ENCODE measurements at regions of chr11 and their contacts with region 1.

Region 1: DNA sequence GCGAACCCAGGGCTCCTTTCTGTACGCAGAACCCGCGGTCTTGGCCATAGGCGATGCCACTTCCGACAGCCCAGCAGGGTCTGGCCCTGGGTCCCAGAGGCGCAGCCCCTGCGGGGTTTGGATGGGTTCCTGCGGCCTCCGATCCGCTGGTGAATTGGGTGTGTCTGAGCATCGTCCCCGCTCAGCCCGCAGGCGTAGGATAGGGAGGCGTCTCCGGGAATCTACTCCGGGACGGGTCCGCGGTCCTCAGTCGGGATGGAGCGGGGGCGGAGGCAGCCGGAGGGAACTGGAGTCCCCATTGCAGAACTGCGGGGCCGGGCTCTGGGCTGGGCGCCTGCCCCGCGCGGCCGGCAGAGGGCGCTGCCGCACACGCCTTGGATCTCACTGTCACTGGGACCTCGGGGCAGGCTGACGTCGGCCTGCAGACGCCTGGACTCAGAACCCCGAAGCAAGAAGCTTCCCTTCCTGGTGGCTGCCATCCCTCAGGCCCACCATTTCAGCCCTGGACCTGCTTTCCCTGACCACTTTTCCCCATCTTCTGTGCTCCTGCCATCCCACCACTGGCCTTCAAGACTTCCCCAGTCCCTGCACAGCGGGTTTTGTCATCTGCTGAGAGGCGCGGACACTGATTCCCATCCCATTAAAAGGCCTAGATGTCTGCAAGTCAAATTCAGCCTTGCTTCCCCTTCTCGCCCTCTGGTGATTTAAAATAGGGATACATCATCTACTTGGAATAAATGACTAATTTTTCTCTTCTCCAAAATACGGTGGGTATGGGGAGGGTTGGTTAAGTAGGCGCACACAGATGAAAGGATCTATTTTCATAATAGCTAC is 38.3 kb upstream of the CREB3L1 start:
- DNase-seq: peak; percentile 84
- ATAC-seq: peak; percentile 66
- H3K4me3 Mint-ChIP-seq: peak overlapping the region; percentile 60
- H3K27ac Mint-ChIP-seq: no peak overlapping the region
- H3K4me1 Mint-ChIP-seq: peaks cover 37% of the 10 kb centered on the region
- H3K27me3 Mint-ChIP-seq: peaks cover 16% of the 10 kb centered on the region
- CTCF ChIP-seq: peak; percentile 96

Region 2: GRCh38 chr11:46121724-46122477 is 117.3 kb before region 1 on chr11:
- CTCF ChIA-PET with region 1: interaction called, 7 read pairs
- POLR2A ChIA-PET with region 1: interaction called, 3 read pairs
- intact Hi-C with region 1: loop called (anchors 10 kb)
- DNase-seq: peak; percentile 79
- ATAC-seq: peak; percentile 47
- H3K4me3 Mint-ChIP-seq: peak overlapping the region; percentile 79
- H3K27ac Mint-ChIP-seq: peak overlapping the region; percentile 90
- H3K4me1 Mint-ChIP-seq: peaks cover 33% of the 10 kb centered on the region
- H3K27me3 Mint-ChIP-seq: no peaks in the 10 kb centered on the region
- CTCF ChIP-seq: no peak

Region 3: GRCh38 chr11:46188045-46188444 is 51.1 kb before region 1 on chr11:
- CTCF ChIA-PET with region 1: no interaction called
- POLR2A ChIA-PET with region 1: no interaction called
- intact Hi-C with region 1: no loop called
- DNase-seq: no peak
- ATAC-seq: no peak
- H3K4me3 Mint-ChIP-seq: no peak overlapping the region
- H3K27ac Mint-ChIP-seq: no peak overlapping the region
- H3K4me1 Mint-ChIP-seq: no peaks in the 10 kb centered on the region
- H3K27me3 Mint-ChIP-seq: peaks cover 16% of the 10 kb centered on the region
- CTCF ChIP-seq: no peak

Region 4: DNA sequence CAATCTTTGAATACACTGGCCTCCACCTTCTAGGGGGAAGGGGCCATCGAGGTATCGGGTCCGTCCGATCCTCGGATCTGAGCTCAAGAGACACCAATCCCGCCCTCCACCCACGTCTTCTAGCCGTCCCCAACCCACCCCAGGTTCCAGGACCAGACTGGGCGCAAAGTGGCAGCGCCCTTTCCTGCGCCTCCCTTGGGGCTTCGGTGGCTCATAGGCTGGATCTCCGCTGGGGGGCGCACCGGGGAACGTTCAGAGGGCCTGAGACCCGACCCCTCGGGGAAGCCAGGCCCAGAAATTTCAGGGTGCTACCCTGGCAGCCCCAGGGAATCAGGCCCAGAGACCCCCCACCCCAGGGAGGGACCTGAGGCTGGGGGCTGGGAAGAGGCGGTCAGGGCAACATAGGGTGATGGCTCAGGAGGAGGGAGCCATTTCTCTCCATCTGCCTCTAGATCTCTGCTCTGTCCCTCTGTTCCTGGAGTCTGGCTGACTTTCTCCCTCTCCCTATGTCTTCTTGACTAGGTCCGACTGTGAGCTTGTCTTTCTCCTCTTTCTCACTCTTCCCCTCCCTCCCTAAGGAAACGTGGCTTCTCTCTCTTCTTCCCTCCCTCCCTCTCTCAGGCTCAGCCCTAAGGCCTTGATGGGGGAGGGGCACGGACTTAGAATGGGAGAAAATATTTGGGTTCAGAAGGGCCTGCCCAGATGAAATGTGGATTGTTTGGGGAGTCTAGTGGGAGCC is 39.4 kb after region 1 on chr11:
- CTCF ChIA-PET with region 1: interaction called, 10 read pairs
- POLR2A ChIA-PET with region 1: interaction called, 8 read pairs
- intact Hi-C with region 1: no loop called
- DNase-seq: peak; percentile 64
- ATAC-seq: peak; percentile 74
- H3K4me3 Mint-ChIP-seq: peak overlapping the region; percentile 7
- H3K27ac Mint-ChIP-seq: no peak overlapping the region
- H3K4me1 Mint-ChIP-seq: peaks cover 4% of the 10 kb centered on the region
- H3K27me3 Mint-ChIP-seq: peaks cover 33% of the 10 kb centered on the region
- CTCF ChIP-seq: peak; percentile 55

Region 5: DNA sequence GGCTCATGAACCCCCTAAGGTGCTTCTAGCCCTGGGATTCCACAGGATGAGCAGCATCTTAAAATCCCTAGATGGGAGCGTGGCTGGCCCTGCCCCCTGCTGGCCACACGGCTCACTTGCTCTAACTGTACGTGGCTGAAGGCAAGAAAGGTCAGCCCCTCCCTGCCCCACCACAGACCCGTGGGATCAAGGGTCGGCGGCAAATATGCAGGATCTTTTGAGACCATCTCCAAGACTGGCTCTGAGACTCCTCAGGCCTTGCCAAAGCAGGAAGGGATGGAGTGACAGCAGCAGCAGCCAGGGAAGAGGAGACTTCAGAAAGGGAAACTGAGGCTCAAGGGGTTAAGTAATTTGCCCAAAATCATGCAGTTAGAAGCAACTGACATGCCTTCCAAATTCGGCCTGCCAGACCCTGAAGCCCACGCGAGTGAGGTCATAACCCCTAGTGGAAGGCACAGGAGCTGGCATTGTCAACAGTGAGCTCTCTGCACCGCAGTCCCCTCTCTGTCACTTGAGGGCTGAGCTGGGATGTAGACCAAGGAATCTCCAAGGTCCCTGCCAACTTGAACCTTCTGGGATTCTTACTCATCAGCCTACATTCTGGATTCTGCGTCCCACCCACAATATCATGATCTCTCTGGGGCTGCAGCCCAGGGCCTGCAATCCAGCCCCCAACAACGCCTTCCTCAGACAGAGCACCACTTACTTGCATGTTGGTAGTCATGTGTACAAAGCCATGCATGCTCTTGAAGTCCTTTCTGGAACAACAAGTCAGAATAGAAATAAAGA is 69.6 kb after region 1 on chr11:
- CTCF ChIA-PET with region 1: interaction called, 382 read pairs
- POLR2A ChIA-PET with region 1: interaction called, 5 read pairs
- intact Hi-C with region 1: loop called (anchors 5 kb)
- DNase-seq: peak; percentile 88
- ATAC-seq: peak; percentile 88
- H3K4me3 Mint-ChIP-seq: no peak overlapping the region
- H3K27ac Mint-ChIP-seq: no peak overlapping the region
- H3K4me1 Mint-ChIP-seq: peaks cover 5% of the 10 kb centered on the region
- H3K27me3 Mint-ChIP-seq: no peaks in the 10 kb centered on the region
- CTCF ChIP-seq: peak; percentile 92

Region 6: GRCh38 chr11:46332568-46333393 is 93.6 kb after region 1 on chr11:
- CTCF ChIA-PET with region 1: interaction called, 39 read pairs
- POLR2A ChIA-PET with region 1: interaction called, 7 read pairs
- intact Hi-C with region 1: no loop called
- DNase-seq: peak; percentile 71
- ATAC-seq: peak; percentile 31
- H3K4me3 Mint-ChIP-seq: peak overlapping the region; percentile 67
- H3K27ac Mint-ChIP-seq: peak overlapping the region; percentile 16
- H3K4me1 Mint-ChIP-seq: peaks cover 45% of the 10 kb centered on the region
- H3K27me3 Mint-ChIP-seq: no peaks in the 10 kb centered on the region
- CTCF ChIP-seq: no peak

Region 7: GRCh38 chr11:46352063-46352841 is 113.1 kb after region 1 on chr11:
- CTCF ChIA-PET with region 1: interaction called, 25 read pairs
- POLR2A ChIA-PET with region 1: no interaction called
- intact Hi-C with region 1: no loop called
- DNase-seq: peak; percentile 86
- ATAC-seq: peak; percentile 63
- H3K4me3 Mint-ChIP-seq: peak overlapping the region; percentile 78
- H3K27ac Mint-ChIP-seq: peak overlapping the region; percentile 89
- H3K4me1 Mint-ChIP-seq: peaks cover 76% of the 10 kb centered on the region
- H3K27me3 Mint-ChIP-seq: no peaks in the 10 kb centered on the region
- CTCF ChIP-seq: peak; percentile 100

Region 8: GRCh38 chr11:46367244-46367915 is 128.2 kb after region 1 on chr11:
- CTCF ChIA-PET with region 1: interaction called, 19 read pairs
- POLR2A ChIA-PET with region 1: interaction called, 3 read pairs
- intact Hi-C with region 1: no loop called
- DNase-seq: peak; percentile 88
- ATAC-seq: peak; percentile 89
- H3K4me3 Mint-ChIP-seq: peak overlapping the region; percentile 42
- H3K27ac Mint-ChIP-seq: peak overlapping the region; percentile 88
- H3K4me1 Mint-ChIP-seq: peaks cover 40% of the 10 kb centered on the region
- H3K27me3 Mint-ChIP-seq: no peaks in the 10 kb centered on the region
- CTCF ChIP-seq: peak; percentile 96

Measured in activated CD8-positive, alpha-beta T cell treated with anti-CD3 and anti-CD28 coated beads for 36 hours (primary cell).